Right cardiac atrium (tissue), 5 donors: ENCODE measurements at regions of chr4 and their contacts with region 1.

Region 1: GRCh38 chr4:24489870-24490269 is 94.5 kb downstream of the DHX15 start:
- DNase-seq: no peak
- ATAC-seq: peak; percentile 27 to 47
- H3K4me3 ChIP-seq: no peak overlapping the region
- H3K27ac ChIP-seq: no peak overlapping the region
- H3K4me1 ChIP-seq: no peaks in the 10 kb centered on the region
- H3K27me3 ChIP-seq: no peaks in the 10 kb centered on the region

Region 2: DNA sequence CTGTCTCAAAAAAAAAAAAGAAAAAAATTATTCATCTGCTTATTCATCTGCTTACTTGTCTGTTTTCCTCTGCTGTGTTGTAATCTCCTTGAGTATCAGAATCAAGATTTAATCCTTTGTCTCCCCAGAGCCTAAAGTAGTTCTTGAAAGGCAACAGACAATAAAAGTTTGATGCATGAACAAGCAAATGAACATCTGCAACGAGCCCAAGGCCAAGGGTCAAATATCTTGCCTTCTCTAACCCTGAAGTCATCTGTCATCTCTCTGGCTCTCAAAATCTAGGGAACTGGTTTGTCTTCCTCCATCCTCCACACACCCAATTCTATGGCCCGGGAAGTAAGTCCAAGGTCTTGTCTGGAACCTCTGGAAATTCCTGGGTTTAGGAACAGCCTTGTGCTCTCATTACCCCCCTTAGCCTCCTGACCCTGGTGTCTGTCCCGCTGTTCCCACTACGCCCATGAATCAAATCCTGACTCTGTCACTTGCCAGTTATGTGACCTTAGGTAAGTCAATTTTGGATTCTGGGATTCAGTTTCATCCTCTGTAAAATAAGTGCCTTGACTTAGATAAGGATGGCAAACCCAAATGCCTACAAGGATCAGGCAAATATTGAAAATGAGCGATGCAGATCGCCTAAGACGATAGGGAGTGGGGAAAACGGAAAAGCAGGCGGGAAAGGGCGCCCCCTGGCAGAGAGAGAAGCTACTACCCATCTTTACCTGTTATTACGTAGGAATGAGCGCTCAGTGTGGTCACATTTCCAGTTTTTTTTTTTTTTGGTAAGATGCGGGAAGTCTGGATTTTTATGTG is 197.2 kb after region 1 on chr4:
- intact Hi-C with region 1: loop called in 1 of 4 experiments (anchors 10 kb)
- DNase-seq: peak in 1 of 3 donors; percentile 53
- ATAC-seq: no peak
- H3K4me3 ChIP-seq: no peak overlapping the region
- H3K27ac ChIP-seq: no peak overlapping the region
- H3K4me1 ChIP-seq: no peaks in the 10 kb centered on the region
- H3K27me3 ChIP-seq: no peaks in the 10 kb centered on the region